ENCODE measurements at regions of chr15 and their contacts with region 1.

Region 1: GRCh38 chr15:67240235-67241131 is 14.0 kb downstream of the AAGAB start:
- DNase-seq: peak; percentile 72
- H3K4me3 Mint-ChIP-seq: peak overlapping the region; percentile 80
- H3K27ac Mint-ChIP-seq: peak overlapping the region; percentile 91
- H3K4me1 Mint-ChIP-seq: peaks cover 44% of the 10 kb centered on the region
- H3K27me3 Mint-ChIP-seq: no peaks in the 10 kb centered on the region

Region 2: DNA sequence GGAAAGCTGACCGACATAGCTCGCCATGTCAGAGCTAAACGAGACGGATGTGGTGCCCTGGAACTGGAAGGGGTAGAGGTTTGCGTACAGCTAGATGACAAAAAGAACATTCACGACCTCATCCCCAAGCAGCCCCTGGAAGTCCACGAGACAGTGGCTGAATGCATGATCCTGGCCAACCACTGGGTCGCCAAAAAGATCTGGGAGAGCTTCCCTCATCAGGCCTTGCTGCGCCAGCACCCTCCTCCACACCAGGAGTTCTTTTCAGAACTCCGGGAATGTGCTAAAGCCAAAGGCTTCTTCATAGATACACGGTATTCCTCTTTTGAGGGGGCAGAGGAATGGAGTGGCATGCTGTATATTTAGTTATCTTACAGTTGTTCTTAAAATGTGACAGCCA is 914.4 kb before region 1 on chr15:
- intact Hi-C with region 1: no loop called
- DNase-seq: no peak
- H3K4me3 Mint-ChIP-seq: no peak overlapping the region
- H3K27ac Mint-ChIP-seq: no peak overlapping the region
- H3K4me1 Mint-ChIP-seq: no peaks in the 10 kb centered on the region
- H3K27me3 Mint-ChIP-seq: no peaks in the 10 kb centered on the region

Region 3: GRCh38 chr15:67024314-67024997 is 216.0 kb before region 1 on chr15:
- intact Hi-C with region 1: loop called (anchors 1 kb)
- DNase-seq: no peak
- H3K4me3 Mint-ChIP-seq: peak overlapping the region; percentile 49
- H3K27ac Mint-ChIP-seq: peak overlapping the region; percentile 64
- H3K4me1 Mint-ChIP-seq: peaks cover 28% of the 10 kb centered on the region
- H3K27me3 Mint-ChIP-seq: no peaks in the 10 kb centered on the region

Region 4: GRCh38 chr15:67175643-67176071 is 64.8 kb before region 1 on chr15:
- intact Hi-C with region 1: loop called (anchors 2 kb)
- DNase-seq: peak; percentile 71
- H3K4me3 Mint-ChIP-seq: peak overlapping the region; percentile 24
- H3K27ac Mint-ChIP-seq: peak overlapping the region; percentile 82
- H3K4me1 Mint-ChIP-seq: peaks cover 63% of the 10 kb centered on the region
- H3K27me3 Mint-ChIP-seq: no peaks in the 10 kb centered on the region

Region 5: GRCh38 chr15:67254238-67255175 is 14.0 kb after region 1 on chr15 and contains the starts of genes AAGAB and IQCH:
- intact Hi-C with region 1: loop called (anchors 1 kb)
- DNase-seq: peak; percentile 100
- H3K4me3 Mint-ChIP-seq: peak within 1 kb of the TSS; percentile 99
- H3K27ac Mint-ChIP-seq: peak within 1 kb of the TSS; percentile 98
- H3K4me1 Mint-ChIP-seq: peaks cover 28% of the 10 kb centered on the region
- H3K27me3 Mint-ChIP-seq: peaks cover 15% of the 10 kb centered on the region
- total RNA-seq, gene AAGAB: 44.9 and 48.6 TPM in 2 replicates
- total RNA-seq, gene IQCH: 0.70 and 1.6 TPM in 2 replicates

Region 6: GRCh38 chr15:67303490-67304363 is 63.2 kb after region 1 on chr15:
- intact Hi-C with region 1: loop called (anchors 1 kb)
- DNase-seq: peak; percentile 73
- H3K4me3 Mint-ChIP-seq: no peak overlapping the region
- H3K27ac Mint-ChIP-seq: no peak overlapping the region
- H3K4me1 Mint-ChIP-seq: peaks cover 4% of the 10 kb centered on the region
- H3K27me3 Mint-ChIP-seq: peaks cover 12% of the 10 kb centered on the region

Measured in activated CD4-positive, alpha-beta T cell treated with anti-CD3 and anti-CD28 coated beads, Interleukin-2, amount 10 ng/mL, durations not matched to agents 24 days and 14 days (primary cell).